Right ventricle myocardium superior (tissue), 1 donor: ENCODE measurements at regions of chr2 and their contacts with region 1.

Region 1: GRCh38 chr2:232609607-232610006 is 23.8 kb upstream of the EFHD1 start:
- DNase-seq: no peak
- ATAC-seq: no peak

Region 2: GRCh38 chr2:232537079-232537478 is 72.5 kb before region 1 on chr2:
- intact Hi-C with region 1: no loop called
- DNase-seq: peak; percentile 35
- ATAC-seq: peak; percentile 23

Region 3: GRCh38 chr2:232668805-232669444 is 59.3 kb after region 1 on chr2:
- intact Hi-C with region 1: loop called (anchors 2 kb)
- DNase-seq: no peak
- ATAC-seq: peak; percentile 70

Region 4: DNA sequence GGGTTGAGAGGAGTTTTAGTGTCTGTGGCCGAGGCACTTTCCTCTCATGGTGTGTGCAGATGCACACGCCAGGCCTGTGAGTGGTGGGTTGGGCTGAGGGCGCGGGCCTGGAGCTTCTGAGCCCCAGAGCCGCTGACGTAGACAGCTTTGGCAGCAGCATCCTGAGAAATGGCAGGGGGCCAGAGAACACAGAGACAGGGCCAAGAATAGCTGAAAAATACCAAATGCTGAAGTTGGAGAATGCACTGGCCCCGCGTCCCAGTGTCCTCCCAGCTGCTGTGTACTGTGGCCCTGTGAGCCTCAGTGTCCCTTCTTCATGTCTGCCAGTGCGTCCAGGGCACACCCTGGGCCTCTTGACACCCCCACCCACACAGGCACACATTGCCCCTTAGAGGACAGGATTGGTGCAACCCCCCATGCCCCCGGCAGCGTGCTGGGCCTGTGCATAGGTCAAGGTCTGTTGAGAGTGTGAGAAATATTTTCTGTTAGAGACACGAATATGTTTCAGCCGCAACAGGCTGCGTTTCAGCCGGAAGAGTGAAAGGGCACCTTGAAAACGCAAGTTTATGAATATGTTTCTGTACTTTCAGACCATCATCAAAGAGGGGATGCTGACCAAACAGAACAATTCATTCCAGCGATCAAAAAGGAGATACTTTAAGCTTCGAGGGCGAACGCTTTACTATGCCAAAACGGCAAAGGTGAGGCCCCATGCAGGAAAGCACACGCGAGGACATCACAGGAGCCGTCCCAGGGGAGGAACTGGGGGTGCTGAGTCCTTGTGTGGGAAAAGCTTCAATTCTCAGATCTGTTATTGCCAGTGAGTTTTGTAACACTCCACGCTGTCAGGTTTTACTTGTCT is 778.3 kb after region 1 on chr2:
- intact Hi-C with region 1: no loop called
- DNase-seq: peak; percentile 94
- ATAC-seq: peak; percentile 94